Right cardiac atrium (tissue), 5 donors: ENCODE measurements at regions of chr2 and their contacts with region 1.

Region 1: DNA sequence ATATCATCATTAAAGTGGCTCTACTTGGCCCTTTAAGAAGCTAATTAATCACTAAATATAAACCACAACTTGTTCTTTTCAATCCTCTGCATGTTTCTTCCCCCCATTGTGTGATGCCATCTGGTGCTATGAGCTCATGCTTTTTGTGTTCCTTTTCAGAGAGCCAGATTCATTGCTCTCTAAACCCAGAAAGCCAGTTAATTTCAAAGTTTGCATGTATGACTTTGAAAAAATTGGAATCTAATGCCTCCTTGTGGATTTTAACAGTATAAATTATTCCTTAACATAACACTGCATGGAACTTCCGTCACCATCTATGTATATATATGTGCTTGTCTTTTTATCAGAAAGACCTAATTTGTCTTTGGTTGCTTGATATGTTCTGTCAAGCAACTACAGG is 31.1 kb downstream of the TMEM178A start:
- DNase-seq: no peak
- ATAC-seq: peak; percentile 67 to 71
- H3K4me3 ChIP-seq: no peak overlapping the region
- H3K27ac ChIP-seq: no peak overlapping the region
- H3K4me1 ChIP-seq: peaks cover 7% of the 10 kb centered on the region
- H3K27me3 ChIP-seq: no peaks in the 10 kb centered on the region

Region 2: DNA sequence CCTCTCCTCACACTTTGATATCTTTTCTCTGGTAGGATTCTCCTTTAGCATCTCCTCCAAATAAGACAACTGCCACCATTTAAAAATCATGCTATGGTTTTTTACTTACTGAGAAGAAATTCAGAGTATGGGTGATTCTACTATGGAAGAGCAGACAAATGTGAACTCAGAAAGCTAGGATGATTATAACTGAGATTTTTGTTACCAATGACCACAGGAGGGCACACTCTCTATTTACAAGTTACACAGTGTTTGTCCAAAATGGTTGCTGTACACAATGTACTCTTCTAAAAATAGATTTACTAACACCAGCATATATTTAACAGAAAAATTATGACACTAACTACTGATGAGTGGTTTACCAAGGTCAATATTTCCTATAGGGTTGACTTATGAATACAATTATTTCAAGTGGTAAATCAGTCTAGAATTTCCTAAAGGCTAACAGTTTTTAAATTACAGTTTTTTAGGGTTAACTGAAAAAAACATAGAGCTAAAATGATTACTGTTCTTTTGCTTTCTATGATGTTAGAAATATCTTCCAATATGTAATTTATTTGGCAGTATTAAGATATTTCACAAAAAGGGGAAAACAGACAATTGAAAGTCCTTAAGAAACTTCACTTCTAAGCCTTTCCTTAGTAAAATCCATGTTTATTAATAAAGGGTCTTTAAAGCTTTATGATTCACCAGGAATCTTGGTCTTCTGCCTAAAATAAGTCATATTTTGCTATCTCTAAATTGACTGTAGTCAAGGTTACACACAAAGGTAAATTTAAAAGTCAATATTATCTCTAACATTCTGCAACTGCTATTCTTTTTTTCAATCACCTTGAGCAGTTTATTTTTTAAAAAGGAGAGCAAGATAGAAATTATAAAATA is 317.0 kb before region 1 on chr2:
- intact Hi-C with region 1: loop called in 1 of 4 experiments (anchors 10 kb)
- DNase-seq: no peak
- ATAC-seq: peak; percentile 79 to 84
- H3K4me3 ChIP-seq: no peak overlapping the region
- H3K27ac ChIP-seq: no peak overlapping the region
- H3K4me1 ChIP-seq: peaks cover 3% of the 10 kb centered on the region
- H3K27me3 ChIP-seq: no peaks in the 10 kb centered on the region

Region 3: GRCh38 chr2:39513641-39514094 is 183.2 kb before region 1 on chr2:
- intact Hi-C with region 1: loop called in 3 of 4 experiments (anchors 5 to 10 kb)
- DNase-seq: peak in 2 of 3 donors; percentile 46 to 66
- ATAC-seq: peak; percentile 68 to 87
- H3K4me3 ChIP-seq: no peak overlapping the region
- H3K27ac ChIP-seq: peak overlapping the region; percentile 75
- H3K4me1 ChIP-seq: peaks cover 28% of the 10 kb centered on the region
- H3K27me3 ChIP-seq: no peaks in the 10 kb centered on the region

Region 4: DNA sequence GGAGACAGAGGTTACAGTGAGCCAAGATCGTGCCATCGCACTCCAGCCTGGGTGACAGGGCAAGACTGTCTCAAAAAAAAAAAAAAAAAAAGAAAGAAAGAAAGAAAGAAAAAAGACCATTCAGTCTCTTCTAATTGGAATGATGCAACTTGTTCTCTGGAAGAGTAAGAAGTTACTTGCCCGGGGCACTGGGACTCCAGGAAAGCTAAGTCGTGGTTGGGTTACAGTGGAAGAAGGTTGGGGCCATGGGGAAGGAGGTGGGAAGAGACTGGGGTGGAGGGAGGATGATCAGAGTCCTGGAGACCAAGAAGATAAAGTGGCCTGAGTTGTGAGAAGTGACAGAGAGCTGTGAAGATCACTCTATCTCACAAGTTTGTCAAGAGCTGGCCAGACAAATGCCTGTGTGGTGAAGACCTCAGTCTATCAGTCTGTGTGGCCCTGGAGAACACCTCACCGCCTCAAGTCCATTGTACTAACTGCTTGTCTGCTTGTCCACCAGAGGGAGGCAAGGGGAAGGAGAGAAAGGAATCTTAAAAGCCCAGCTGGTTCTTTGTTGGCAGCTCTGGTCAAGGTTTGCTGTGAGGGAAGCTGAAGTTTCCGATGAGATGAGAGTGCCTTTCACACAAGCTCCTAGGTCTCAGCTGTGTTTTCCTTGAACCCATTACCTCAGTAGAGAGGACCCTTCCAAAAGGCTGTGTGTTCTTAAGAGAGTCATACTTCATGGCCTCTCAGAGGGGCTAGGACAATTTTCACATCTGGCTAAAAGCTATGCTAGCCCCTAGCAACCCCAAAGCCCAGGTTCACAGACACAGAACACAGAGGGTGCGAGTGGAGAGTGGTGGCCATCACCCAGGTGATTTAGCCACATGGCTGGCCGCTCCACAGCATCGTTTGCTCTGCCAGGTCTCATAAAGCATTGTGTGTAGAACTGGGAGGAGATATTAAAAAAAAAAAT is 103.1 kb before region 1 on chr2:
- intact Hi-C with region 1: loop called in 2 of 4 experiments (anchors 5 kb)
- DNase-seq: peak in 1 of 3 donors; percentile 31
- ATAC-seq: peak; percentile 83 to 90
- H3K4me3 ChIP-seq: no peak overlapping the region
- H3K27ac ChIP-seq: no peak overlapping the region
- H3K4me1 ChIP-seq: peaks cover 3% of the 10 kb centered on the region
- H3K27me3 ChIP-seq: no peaks in the 10 kb centered on the region